SK-N-SH (cell line): ENCODE measurements at regions of chr1 and their contacts with region 1.

Region 1: GRCh38 chr1:214261206-214262123 is 19.5 kb upstream of the SMYD2 start:
- DNase-seq: peak; percentile 72
- H3K4me3 ChIP-seq: peak overlapping the region; percentile 26 to 42; a peak in 3 of 4 replicates
- H3K27ac ChIP-seq: peak overlapping the region in 1 of 2 experiments; percentile 36; a peak in 2 of 4 replicates
- H3K4me1 ChIP-seq: peaks cover 8 to 10% of the 10 kb centered on the region in 2 experiments; a peak in 3 of 4 replicates
- H3K27me3 ChIP-seq: no peaks in the 10 kb centered on the region
- CTCF ChIP-seq: peak; percentile 98
- EP300 ChIP-seq: no peak
- RAD21 ChIP-seq: peak; percentile 91

Region 2: GRCh38 chr1:214076708-214077065 is 184.8 kb before region 1 on chr1:
- CTCF ChIA-PET with region 1: no interaction called
- POLR2A ChIA-PET with region 1: no interaction called
- DNase-seq: no peak
- H3K4me3 ChIP-seq: no peak overlapping the region
- H3K27ac ChIP-seq: no peak overlapping the region
- H3K4me1 ChIP-seq: no peaks in the 10 kb centered on the region; a peak in 1 of 4 replicates
- H3K27me3 ChIP-seq: no peaks in the 10 kb centered on the region
- CTCF ChIP-seq: no peak
- EP300 ChIP-seq: no peak
- RAD21 ChIP-seq: no peak

Region 3: DNA sequence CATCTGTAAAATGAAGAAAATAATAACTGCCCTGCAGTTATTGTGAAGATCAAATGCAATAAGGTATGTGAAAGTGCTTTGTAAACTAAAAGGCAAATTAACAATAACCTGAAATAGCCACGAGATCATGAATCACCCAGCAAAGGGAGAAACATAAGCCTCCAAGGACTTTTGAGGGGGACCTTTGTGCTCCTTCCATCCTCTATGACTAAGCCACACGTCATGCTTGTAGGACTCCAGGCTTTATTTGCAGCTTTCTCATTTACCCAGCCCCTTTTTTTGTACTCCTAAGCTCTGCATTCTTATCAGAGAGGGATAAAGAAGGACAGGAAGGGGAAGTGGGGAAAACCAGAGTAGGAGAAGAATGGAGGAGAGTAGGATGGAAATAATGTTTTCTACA is 158.6 kb before region 1 on chr1:
- CTCF ChIA-PET with region 1: no interaction called
- POLR2A ChIA-PET with region 1: no interaction called
- DNase-seq: no peak
- H3K4me3 ChIP-seq: no peak overlapping the region
- H3K27ac ChIP-seq: no peak overlapping the region
- H3K4me1 ChIP-seq: peaks cover 0 to 2% of the 10 kb centered on the region in 2 experiments; a peak in 1 of 4 replicates
- H3K27me3 ChIP-seq: no peaks in the 10 kb centered on the region
- CTCF ChIP-seq: no peak
- EP300 ChIP-seq: no peak
- RAD21 ChIP-seq: no peak

Region 4: DNA sequence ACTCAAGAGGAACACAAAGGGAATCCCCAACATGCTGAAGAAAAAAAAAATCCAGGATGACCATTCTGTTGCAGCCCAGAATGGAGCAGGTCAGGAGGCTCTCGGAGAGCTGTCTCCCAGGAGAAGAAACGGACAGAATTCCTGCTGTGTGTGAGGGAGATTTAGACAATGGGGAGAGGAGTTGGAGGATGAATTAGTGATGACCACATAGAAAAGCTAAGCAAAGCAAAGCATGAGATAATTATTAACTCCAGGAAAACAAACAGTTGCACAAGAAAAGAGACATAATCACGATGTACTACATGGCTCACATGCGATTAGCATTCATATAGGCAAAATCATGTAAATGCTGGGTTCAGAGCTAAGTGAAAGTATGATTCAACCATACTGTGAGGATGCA is 41.6 kb before region 1 on chr1:
- CTCF ChIA-PET with region 1: interaction called, 48 read pairs
- POLR2A ChIA-PET with region 1: no interaction called
- DNase-seq: no peak
- H3K4me3 ChIP-seq: no peak overlapping the region
- H3K27ac ChIP-seq: no peak overlapping the region
- H3K4me1 ChIP-seq: no peaks in the 10 kb centered on the region
- H3K27me3 ChIP-seq: peaks cover 14% of the 10 kb centered on the region; the same call in 1 of the 2 replicates
- CTCF ChIP-seq: no peak
- EP300 ChIP-seq: no peak
- RAD21 ChIP-seq: no peak

Region 5: DNA sequence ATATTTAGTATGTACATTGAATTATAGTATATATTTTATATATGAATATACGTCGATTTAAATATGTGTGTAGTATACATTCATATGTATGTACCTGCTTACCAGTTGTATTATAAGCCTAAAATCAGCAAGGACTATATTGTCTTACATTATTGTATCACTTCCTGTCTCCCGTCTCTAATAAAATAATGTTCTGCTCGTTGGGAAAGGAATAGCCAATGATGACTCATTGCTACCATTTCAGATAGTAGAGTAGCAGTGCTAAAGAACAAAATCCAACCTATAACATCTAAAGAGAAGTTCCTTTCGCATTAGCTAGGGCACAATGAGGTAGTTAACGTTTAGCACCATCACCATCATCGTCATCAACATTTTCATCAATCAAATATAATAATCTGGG is 20.4 kb before region 1 on chr1:
- CTCF ChIA-PET with region 1: interaction called, 23 read pairs
- POLR2A ChIA-PET with region 1: no interaction called
- DNase-seq: no peak
- H3K4me3 ChIP-seq: no peak overlapping the region
- H3K27ac ChIP-seq: no peak overlapping the region
- H3K4me1 ChIP-seq: no peaks in the 10 kb centered on the region
- H3K27me3 ChIP-seq: no peaks in the 10 kb centered on the region
- CTCF ChIP-seq: no peak
- EP300 ChIP-seq: no peak
- RAD21 ChIP-seq: no peak

Region 6: GRCh38 chr1:214289574-214290272 is 28.3 kb after region 1 on chr1:
- CTCF ChIA-PET with region 1: interaction called, 18 read pairs
- POLR2A ChIA-PET with region 1: no interaction called
- DNase-seq: no peak
- H3K4me3 ChIP-seq: no peak overlapping the region
- H3K27ac ChIP-seq: no peak overlapping the region
- H3K4me1 ChIP-seq: peaks cover 0 to 7% of the 10 kb centered on the region in 2 experiments; a peak in 2 of 4 replicates
- H3K27me3 ChIP-seq: no peaks in the 10 kb centered on the region
- CTCF ChIP-seq: no peak
- EP300 ChIP-seq: no peak
- RAD21 ChIP-seq: no peak

Region 7: GRCh38 chr1:214321705-214322453 is 60.4 kb after region 1 on chr1:
- CTCF ChIA-PET with region 1: interaction called, 393 read pairs
- POLR2A ChIA-PET with region 1: interaction called, 5 read pairs
- DNase-seq: no peak
- H3K4me3 ChIP-seq: no peak overlapping the region
- H3K27ac ChIP-seq: no peak overlapping the region
- H3K4me1 ChIP-seq: peaks cover 0 to 4% of the 10 kb centered on the region in 2 experiments; a peak in 1 of 4 replicates
- H3K27me3 ChIP-seq: no peaks in the 10 kb centered on the region
- CTCF ChIP-seq: no peak
- EP300 ChIP-seq: no peak
- RAD21 ChIP-seq: no peak

Region 8: GRCh38 chr1:214525535-214526019 is 264.1 kb after region 1 on chr1:
- CTCF ChIA-PET with region 1: no interaction called
- POLR2A ChIA-PET with region 1: no interaction called
- DNase-seq: no peak
- H3K4me3 ChIP-seq: no peak overlapping the region
- H3K27ac ChIP-seq: no peak overlapping the region
- H3K4me1 ChIP-seq: peaks cover 0 to 31% of the 10 kb centered on the region in 2 experiments; a peak in 2 of 4 replicates
- H3K27me3 ChIP-seq: no peaks in the 10 kb centered on the region
- CTCF ChIP-seq: no peak
- EP300 ChIP-seq: no peak
- RAD21 ChIP-seq: no peak